ENCODE measurements at regions of chr19 and their contacts with region 1.

Region 1: DNA sequence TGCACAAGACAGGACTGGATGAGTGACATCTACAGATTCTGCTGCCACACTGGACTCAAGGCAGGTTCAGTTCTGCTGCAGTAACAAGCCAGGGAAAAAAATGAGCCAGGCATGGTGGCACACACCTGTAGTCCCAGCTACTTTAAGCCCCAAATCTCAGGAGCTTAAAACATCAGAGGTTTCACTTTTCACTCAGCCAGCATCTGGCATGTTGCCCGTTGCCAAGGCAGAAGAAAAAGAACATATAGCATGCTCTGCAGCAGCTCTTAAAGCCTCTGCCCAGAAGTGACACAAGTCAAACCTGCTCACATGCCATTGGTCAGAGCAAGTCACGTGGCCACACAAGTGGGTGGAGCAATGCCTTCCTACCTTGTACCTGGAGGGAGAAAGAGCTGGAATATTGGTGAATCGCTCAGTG is 14.7 kb upstream of the ADGRE5 start:
- DNase-seq: peak; percentile 95
- ATAC-seq: peak; percentile 50
- H3K4me3 Mint-ChIP-seq: peak overlapping the region; percentile 45
- H3K27ac Mint-ChIP-seq: peak overlapping the region; percentile 100
- H3K4me1 Mint-ChIP-seq: peaks cover 78% of the 10 kb centered on the region
- H3K27me3 Mint-ChIP-seq: no peaks in the 10 kb centered on the region

Region 2: GRCh38 chr19:13162518-13163314 is 1203.8 kb before region 1 on chr19:
- CTCF ChIA-PET with region 1: no interaction called
- POLR2A ChIA-PET with region 1: no interaction called
- intact Hi-C with region 1: loop called in 1 of 2 experiments (anchors 5 kb)
- DNase-seq: peak; percentile 96
- ATAC-seq: peak; percentile 56
- H3K4me3 Mint-ChIP-seq: peak overlapping the region; percentile 80
- H3K27ac Mint-ChIP-seq: peak overlapping the region; percentile 94
- H3K4me1 Mint-ChIP-seq: peaks cover 64% of the 10 kb centered on the region
- H3K27me3 Mint-ChIP-seq: no peaks in the 10 kb centered on the region

Region 3: GRCh38 chr19:13689085-13689484 is 677.4 kb before region 1 on chr19:
- CTCF ChIA-PET with region 1: no interaction called
- POLR2A ChIA-PET with region 1: no interaction called
- intact Hi-C with region 1: no loop called
- DNase-seq: peak; percentile 30
- ATAC-seq: peak; percentile 70
- H3K4me3 Mint-ChIP-seq: no peak overlapping the region
- H3K27ac Mint-ChIP-seq: no peak overlapping the region
- H3K4me1 Mint-ChIP-seq: no peaks in the 10 kb centered on the region
- H3K27me3 Mint-ChIP-seq: peaks cover 9% of the 10 kb centered on the region

Region 4: DNA sequence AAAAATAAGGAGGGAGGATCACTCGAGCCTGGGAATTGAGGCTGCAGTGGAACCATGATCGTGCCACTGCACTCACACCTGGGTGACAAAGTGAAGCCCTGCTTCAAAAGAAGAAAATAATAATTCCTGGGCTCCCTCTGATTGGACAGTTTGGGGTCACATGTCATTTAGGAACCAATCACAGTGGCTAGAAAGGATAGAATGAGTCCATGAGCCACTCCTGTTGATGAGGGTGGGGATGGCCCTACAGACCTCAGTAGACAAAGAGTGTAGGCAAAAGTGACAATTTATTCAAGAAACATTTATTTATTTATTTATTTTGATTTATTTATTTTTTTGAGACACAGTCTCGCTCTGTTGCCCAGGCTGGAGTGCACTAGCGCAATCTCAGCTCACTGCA is 12.1 kb before region 1 on chr19:
- CTCF ChIA-PET with region 1: interaction called, 11 read pairs
- POLR2A ChIA-PET with region 1: interaction called, 7 read pairs
- intact Hi-C with region 1: no loop called
- DNase-seq: no peak
- ATAC-seq: no peak
- H3K4me3 Mint-ChIP-seq: no peak overlapping the region
- H3K27ac Mint-ChIP-seq: no peak overlapping the region
- H3K4me1 Mint-ChIP-seq: peaks cover 39% of the 10 kb centered on the region
- H3K27me3 Mint-ChIP-seq: no peaks in the 10 kb centered on the region

Region 5: GRCh38 chr19:14383661-14384555 is 17.4 kb after region 1 on chr19:
- CTCF ChIA-PET with region 1: interaction called, 24 read pairs
- POLR2A ChIA-PET with region 1: interaction called, 96 read pairs
- intact Hi-C with region 1: loop called (anchors 1 kb)
- DNase-seq: peak; percentile 72
- ATAC-seq: peak; percentile 10
- H3K4me3 Mint-ChIP-seq: peak overlapping the region; percentile 92
- H3K27ac Mint-ChIP-seq: peak overlapping the region; percentile 99
- H3K4me1 Mint-ChIP-seq: peaks cover 40% of the 10 kb centered on the region
- H3K27me3 Mint-ChIP-seq: no peaks in the 10 kb centered on the region

Region 6: GRCh38 chr19:14405758-14406644 is 39.5 kb after region 1 on chr19:
- CTCF ChIA-PET with region 1: interaction called, 33 read pairs
- POLR2A ChIA-PET with region 1: interaction called, 8 read pairs
- intact Hi-C with region 1: loop called (anchors 1 kb)
- DNase-seq: peak; percentile 96
- ATAC-seq: peak; percentile 78
- H3K4me3 Mint-ChIP-seq: peak overlapping the region; percentile 12
- H3K27ac Mint-ChIP-seq: no peak overlapping the region
- H3K4me1 Mint-ChIP-seq: peaks cover 16% of the 10 kb centered on the region
- H3K27me3 Mint-ChIP-seq: no peaks in the 10 kb centered on the region

Region 7: DNA sequence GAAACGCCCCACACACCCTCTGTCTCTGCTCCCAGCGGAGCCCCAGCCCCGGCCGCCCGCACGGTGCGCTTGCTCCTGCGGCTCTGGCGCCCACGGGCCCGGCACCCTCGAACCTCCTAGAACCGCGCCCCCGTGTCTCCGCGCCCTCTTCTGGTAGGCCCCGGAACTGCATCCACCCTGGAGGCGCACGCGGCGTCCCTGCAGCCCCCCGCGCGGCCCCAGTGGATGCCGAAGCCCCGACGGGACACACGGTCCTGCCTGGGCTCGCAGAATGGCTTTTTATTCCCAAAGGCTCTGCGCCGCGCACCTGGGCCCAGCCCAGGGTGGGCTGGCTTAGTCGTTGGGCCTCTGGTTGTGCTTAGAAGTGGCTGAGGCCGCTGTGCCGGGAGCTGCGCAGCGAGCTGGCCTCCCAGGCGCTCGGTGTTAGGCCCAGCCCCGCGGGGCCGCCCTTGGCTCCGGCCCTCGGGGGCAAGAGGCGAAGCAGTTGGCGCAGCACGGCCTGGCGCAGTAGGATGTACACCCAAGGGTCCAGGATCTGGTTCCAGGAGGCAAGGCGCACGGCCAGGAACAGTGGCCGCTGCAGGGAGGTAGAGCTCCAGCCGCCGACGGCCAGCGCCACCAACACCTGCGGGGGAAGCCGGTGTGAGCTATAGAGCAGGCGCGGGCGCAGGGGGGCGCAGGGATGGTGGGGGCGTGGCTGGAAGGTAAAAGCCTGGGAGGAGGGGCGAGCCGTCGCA is 105.9 kb after region 1 on chr19:
- CTCF ChIA-PET with region 1: interaction called, 4 read pairs
- POLR2A ChIA-PET with region 1: no interaction called
- intact Hi-C with region 1: loop called in 1 of 2 experiments (anchors 5 kb)
- DNase-seq: peak; percentile 93
- ATAC-seq: peak; percentile 56
- H3K4me3 Mint-ChIP-seq: no peak overlapping the region
- H3K27ac Mint-ChIP-seq: no peak overlapping the region
- H3K4me1 Mint-ChIP-seq: peaks cover 32% of the 10 kb centered on the region
- H3K27me3 Mint-ChIP-seq: peaks cover 16% of the 10 kb centered on the region

Region 8: DNA sequence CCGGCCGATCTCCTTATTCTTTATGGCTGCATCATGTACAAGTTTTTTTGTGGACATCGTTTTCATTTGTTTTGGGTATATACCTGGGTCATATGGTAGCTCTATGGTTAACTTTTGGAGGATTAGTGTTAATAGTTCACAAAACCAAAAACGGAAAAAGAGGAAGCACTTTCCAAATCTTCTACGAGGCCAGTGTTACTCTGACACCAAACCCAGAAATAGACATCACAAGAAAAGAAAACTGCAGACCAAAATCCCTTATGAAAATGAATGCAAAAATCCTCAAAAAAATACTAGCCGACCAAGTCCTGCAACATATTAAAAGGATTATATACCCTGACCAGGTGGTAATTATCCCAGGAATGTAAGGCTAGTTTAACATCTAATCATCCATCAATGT is 382.1 kb after region 1 on chr19:
- CTCF ChIA-PET with region 1: no interaction called
- POLR2A ChIA-PET with region 1: no interaction called
- intact Hi-C with region 1: no loop called
- DNase-seq: no peak
- ATAC-seq: no peak
- H3K4me3 Mint-ChIP-seq: no peak overlapping the region
- H3K27ac Mint-ChIP-seq: no peak overlapping the region
- H3K4me1 Mint-ChIP-seq: no peaks in the 10 kb centered on the region
- H3K27me3 Mint-ChIP-seq: peaks cover 2% of the 10 kb centered on the region

Region 9: DNA sequence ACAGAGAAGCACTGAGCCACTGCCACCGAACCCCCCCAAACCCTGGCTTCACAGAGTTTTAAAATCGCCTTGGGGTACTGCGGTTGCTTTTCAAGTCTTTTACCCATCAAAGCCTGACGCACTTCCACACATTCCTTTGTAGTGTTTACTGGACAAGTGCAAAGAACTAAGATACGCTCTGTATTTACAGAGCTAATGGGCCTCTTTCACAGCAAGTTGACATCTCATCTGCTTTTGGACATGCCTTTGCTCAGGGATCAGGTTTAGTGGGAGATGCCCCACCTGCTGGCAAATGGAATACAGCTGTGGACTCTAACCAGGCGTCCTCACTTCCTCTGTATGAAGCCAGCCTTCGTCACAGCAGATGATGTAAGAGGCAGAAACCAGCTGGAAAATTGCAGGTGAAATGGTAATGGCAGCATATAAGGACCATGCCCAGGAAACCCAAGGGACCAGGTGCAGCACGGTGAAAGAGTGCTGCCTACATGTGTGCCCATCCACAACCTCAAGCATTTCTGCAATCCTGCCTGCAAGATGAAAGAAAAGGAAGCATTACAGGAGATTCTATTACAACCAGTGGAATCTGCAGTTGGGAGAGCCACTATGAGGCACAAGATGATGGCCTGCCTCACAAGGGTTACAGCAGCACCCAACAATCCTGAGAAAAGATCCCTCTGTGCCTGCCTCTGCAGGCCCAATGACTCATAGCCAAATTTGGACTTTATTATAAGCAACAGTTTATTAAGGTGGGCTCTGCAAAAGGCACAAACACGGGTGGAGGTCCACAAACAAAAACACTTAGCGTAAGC is 931.1 kb after region 1 on chr19:
- CTCF ChIA-PET with region 1: no interaction called
- POLR2A ChIA-PET with region 1: no interaction called
- intact Hi-C with region 1: loop called in 1 of 2 experiments (anchors 5 kb)
- DNase-seq: peak; percentile 55
- ATAC-seq: no peak
- H3K4me3 Mint-ChIP-seq: peak overlapping the region; percentile 30
- H3K27ac Mint-ChIP-seq: peak overlapping the region; percentile 91
- H3K4me1 Mint-ChIP-seq: peaks cover 97% of the 10 kb centered on the region
- H3K27me3 Mint-ChIP-seq: no peaks in the 10 kb centered on the region

Measured in activated CD4-positive, alpha-beta T cell treated with anti-CD3 and anti-CD28 coated beads for 36 hours (primary cell).